ENCODE measurements at regions of chr1 and their contacts with region 1.

Region 1: DNA sequence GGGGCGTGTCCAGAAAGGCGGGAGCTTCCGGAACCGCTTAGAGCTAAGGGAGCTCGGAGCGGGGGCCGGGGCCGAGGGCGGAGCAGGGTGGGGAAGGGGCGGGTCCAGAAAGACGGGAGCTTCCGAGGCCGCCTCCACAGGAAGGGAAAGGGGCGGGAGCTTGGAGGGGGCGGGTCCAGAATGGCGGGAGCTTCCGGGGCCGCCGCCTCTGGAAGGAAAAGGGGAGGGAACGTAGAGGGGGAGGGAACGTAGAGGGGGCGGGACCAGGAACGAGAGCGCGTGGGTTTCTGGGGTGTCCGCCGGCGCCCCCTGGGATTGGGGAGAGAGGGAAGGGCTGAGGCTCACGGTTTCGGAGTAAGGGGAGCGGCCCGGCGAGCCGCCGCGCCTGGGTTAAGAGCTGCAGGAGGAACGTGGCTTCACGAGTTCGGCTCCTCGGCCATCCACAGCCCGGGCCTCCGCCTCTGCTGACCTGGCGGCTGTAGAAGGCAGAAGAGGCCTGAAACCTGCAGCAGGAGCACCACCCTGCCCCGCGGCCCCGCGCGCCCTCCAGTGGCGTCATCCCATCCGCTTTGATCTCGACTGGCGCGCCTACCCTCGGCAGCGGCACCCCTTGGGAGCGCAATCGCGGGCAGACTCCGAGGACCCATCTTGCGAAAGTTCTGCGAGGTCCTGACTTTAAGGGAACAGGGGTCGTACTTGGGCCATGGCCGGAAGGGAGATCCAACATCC is 22.9 kb upstream of the HPDL start:
- DNase-seq: peak; percentile 100
- H3K4me3 Mint-ChIP-seq: peak overlapping the region; percentile 91
- H3K27ac Mint-ChIP-seq: peak overlapping the region; percentile 94
- H3K4me1 Mint-ChIP-seq: peaks cover 33% of the 10 kb centered on the region
- H3K27me3 Mint-ChIP-seq: no peaks in the 10 kb centered on the region

Region 2: DNA sequence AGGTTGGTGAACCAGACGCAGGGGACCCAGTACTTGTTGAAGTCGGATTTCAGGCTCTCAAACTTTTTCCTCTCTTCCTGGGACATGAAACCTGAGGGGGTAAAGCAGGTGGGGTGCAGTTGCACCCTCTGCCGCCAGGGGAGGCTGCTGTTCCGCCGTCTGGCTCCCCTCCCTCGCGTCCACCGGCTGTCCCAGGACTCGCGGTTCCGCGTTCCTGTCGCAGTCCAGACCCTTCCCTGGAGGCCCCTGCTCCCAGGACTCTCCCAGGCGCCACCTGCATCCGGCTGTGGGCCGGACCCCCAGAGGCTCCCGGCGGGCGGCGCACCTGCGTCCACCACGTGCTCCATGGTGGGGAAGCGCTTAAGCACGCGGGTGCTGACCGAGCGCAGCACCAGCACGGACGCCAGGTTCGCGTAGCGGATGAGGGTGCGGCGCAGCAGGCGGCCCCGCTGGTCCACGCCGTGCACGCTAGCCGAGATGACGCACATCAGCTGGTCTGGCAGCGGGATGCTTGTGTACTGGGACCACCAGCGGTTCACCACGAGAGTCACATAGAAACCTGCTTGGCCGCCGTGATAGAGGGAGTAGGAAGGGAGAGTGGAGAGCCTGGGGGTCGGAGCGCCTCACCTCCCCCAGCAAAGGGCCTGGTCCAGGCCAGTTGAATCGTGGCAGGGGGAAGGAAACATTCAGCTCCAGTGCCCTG is 517.5 kb before region 1 on chr1:
- CTCF ChIA-PET with region 1: no interaction called
- intact Hi-C with region 1: loop called (anchors 5 kb)
- DNase-seq: peak; percentile 79
- H3K4me3 Mint-ChIP-seq: peak overlapping the region; percentile 72
- H3K27ac Mint-ChIP-seq: peak overlapping the region; percentile 71
- H3K4me1 Mint-ChIP-seq: peaks cover 25% of the 10 kb centered on the region
- H3K27me3 Mint-ChIP-seq: no peaks in the 10 kb centered on the region

Region 3: GRCh38 chr1:45011837-45012638 is 291.7 kb before region 1 on chr1 and contains the start of gene UROD:
- CTCF ChIA-PET with region 1: interaction called, 155 read pairs
- intact Hi-C with region 1: loop called (anchors 1 kb)
- DNase-seq: peak; percentile 96
- H3K4me3 Mint-ChIP-seq: peak within 1 kb of the TSS; percentile 81
- H3K27ac Mint-ChIP-seq: peak within 1 kb of the TSS; percentile 89
- H3K4me1 Mint-ChIP-seq: peaks cover 36% of the 10 kb centered on the region
- H3K27me3 Mint-ChIP-seq: no peaks in the 10 kb centered on the region
- total RNA-seq, gene UROD: 117 to 126 TPM

Region 4: GRCh38 chr1:45230540-45230939 is 73.2 kb before region 1 on chr1:
- CTCF ChIA-PET with region 1: no interaction called
- intact Hi-C with region 1: loop called (anchors 5 kb)
- DNase-seq: peak; percentile 47
- H3K4me3 Mint-ChIP-seq: no peak overlapping the region
- H3K27ac Mint-ChIP-seq: no peak overlapping the region
- H3K4me1 Mint-ChIP-seq: no peaks in the 10 kb centered on the region
- H3K27me3 Mint-ChIP-seq: no peaks in the 10 kb centered on the region

Region 5: GRCh38 chr1:45499415-45499769 is 195.6 kb after region 1 on chr1:
- CTCF ChIA-PET with region 1: no interaction called
- intact Hi-C with region 1: loop called (anchors 1 kb)
- DNase-seq: peak; percentile 30
- H3K4me3 Mint-ChIP-seq: peak overlapping the region; percentile 91
- H3K27ac Mint-ChIP-seq: peak overlapping the region; percentile 84
- H3K4me1 Mint-ChIP-seq: peaks cover 32% of the 10 kb centered on the region
- H3K27me3 Mint-ChIP-seq: no peaks in the 10 kb centered on the region

Measured in activated naive CD4-positive, alpha-beta T cell treated with anti-CD3 and anti-CD28 coated beads for 36 hours (primary cell).